ENCODE measurements at regions of chr4 and their contacts with region 1.

Region 1: DNA sequence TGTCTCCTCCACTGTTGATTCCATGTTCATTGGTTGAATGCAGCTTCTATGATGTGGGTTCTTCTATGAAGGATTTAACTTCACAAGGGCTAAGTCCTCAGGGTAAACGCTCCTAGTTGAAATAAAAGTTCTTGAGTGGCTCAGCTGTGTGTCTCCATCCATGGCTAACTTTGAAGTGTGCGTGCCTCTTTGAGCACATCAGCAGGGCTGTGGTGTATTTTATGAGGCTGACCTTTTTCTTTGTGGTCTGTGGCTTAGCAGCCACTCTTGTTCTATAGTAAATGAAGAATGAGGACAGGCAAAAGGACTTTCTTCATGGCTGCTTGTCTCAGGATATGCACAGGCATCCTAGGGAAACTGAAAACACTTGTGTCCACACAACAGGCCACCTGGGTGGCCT is 88.5 kb downstream of the KIT start:
- DNase-seq: no peak
- H3K4me3 ChIP-seq: no peak overlapping the region
- H3K27ac ChIP-seq: no peak overlapping the region
- H3K4me1 ChIP-seq: no peaks in the 10 kb centered on the region
- H3K27me3 ChIP-seq: no peaks in the 10 kb centered on the region
- CTCF ChIP-seq: no peak
- POLR2A ChIP-seq: no peak

Region 2: GRCh38 chr4:55038176-55038890 is 292.1 kb after region 1 on chr4:
- intact Hi-C with region 1: loop called (anchors 10 kb)
- DNase-seq: peak in 1 of 2 donors; percentile 53
- H3K4me3 ChIP-seq: no peak overlapping the region
- H3K27ac ChIP-seq: peak overlapping the region; percentile 14 to 33
- H3K4me1 ChIP-seq: no peaks in the 10 kb centered on the region
- H3K27me3 ChIP-seq: no peaks in the 10 kb centered on the region
- CTCF ChIP-seq: no peak
- POLR2A ChIP-seq: no peak

Region 3: DNA sequence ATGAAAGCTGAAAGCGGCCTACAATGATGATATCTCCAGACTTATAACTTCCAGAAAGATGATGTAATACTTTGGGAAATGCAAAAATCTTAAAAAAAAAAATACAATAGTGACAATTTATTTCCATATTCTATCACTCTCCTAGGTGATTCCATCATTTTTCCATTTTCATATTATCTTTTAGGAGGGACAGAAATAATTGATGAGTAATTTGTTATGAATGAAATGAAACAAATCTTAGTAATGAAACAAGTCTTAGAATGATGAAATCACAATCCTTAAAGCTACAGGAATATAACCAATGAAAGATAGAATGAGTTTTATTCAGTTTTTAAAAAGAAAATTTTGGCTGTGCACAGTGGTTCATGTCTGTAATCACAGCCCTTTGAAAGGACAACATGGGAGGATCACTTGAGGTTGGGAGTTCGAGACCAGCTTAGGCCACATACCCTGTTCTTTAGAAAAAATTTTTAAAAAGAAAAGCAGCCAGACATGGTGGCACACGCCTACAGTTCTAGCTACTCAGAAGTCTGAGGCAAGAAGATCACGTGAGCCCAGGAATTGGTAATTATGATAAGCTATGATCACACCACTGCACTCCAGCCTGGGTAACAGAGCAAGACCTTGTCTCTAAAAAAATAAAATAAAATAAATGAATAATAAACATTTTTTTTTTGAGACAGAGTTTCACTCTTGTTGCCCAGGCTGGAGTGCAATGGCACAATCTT is 778.8 kb after region 1 on chr4:
- intact Hi-C with region 1: loop called (anchors 10 kb)
- DNase-seq: no peak
- H3K4me3 ChIP-seq: no peak overlapping the region
- H3K27ac ChIP-seq: no peak overlapping the region
- H3K4me1 ChIP-seq: no peaks in the 10 kb centered on the region
- H3K27me3 ChIP-seq: no peaks in the 10 kb centered on the region
- CTCF ChIP-seq: no peak
- POLR2A ChIP-seq: no peak